A549 (cell line): ENCODE measurements at regions of chr20 and their contacts with region 1.

Region 1: GRCh38 chr20:36273414-36274180 is 32.5 kb upstream of the DLGAP4 start:
- DNase-seq: peak; percentile 28 to 58
- ATAC-seq: peak; percentile 41 to 69; a peak in 4 of 6 replicates
- H3K4me3 ChIP-seq: no peak overlapping the region
- H3K27ac ChIP-seq: no peak overlapping the region
- H3K4me1 ChIP-seq: no peaks in the 10 kb centered on the region
- CTCF ChIP-seq: peak; percentile 56
- EP300 ChIP-seq: no peak
- POLR2A ChIP-seq: no peak
- RAD21 ChIP-seq: peak; percentile 54 to 64

Region 2: GRCh38 chr20:36231331-36231730 is 42.3 kb before region 1 on chr20:
- CTCF ChIA-PET with region 1: no interaction called
- POLR2A ChIA-PET with region 1: no interaction called
- DNase-seq: no peak
- ATAC-seq: no peak
- H3K4me3 ChIP-seq: no peak overlapping the region
- H3K27ac ChIP-seq: no peak overlapping the region
- H3K4me1 ChIP-seq: 0 out of 3 replicates have a peak, but pooled peaks cover 3% of the 10 kb centered on the region
- CTCF ChIP-seq: no peak
- EP300 ChIP-seq: no peak
- POLR2A ChIP-seq: no peak
- RAD21 ChIP-seq: no peak

Region 3: GRCh38 chr20:36261389-36262105 is 12.1 kb before region 1 on chr20:
- CTCF ChIA-PET with region 1: interaction called, 10 read pairs
- POLR2A ChIA-PET with region 1: interaction called, 5 read pairs
- DNase-seq: no peak
- ATAC-seq: peak; percentile 13 to 21; a peak in 2 of 6 replicates
- H3K4me3 ChIP-seq: no peak overlapping the region
- H3K27ac ChIP-seq: no peak overlapping the region
- H3K4me1 ChIP-seq: no peaks in the 10 kb centered on the region
- CTCF ChIP-seq: no peak
- EP300 ChIP-seq: no peak
- POLR2A ChIP-seq: no peak
- RAD21 ChIP-seq: no peak

Region 4: GRCh38 chr20:36298795-36299339 is 25.3 kb after region 1 on chr20:
- CTCF ChIA-PET with region 1: no interaction called
- POLR2A ChIA-PET with region 1: no interaction called
- DNase-seq: no peak
- ATAC-seq: no peak
- H3K4me3 ChIP-seq: no peak overlapping the region
- H3K27ac ChIP-seq: no peak overlapping the region
- H3K4me1 ChIP-seq: no peaks in the 10 kb centered on the region
- CTCF ChIP-seq: no peak
- EP300 ChIP-seq: no peak
- POLR2A ChIP-seq: no peak
- RAD21 ChIP-seq: no peak

Region 5: DNA sequence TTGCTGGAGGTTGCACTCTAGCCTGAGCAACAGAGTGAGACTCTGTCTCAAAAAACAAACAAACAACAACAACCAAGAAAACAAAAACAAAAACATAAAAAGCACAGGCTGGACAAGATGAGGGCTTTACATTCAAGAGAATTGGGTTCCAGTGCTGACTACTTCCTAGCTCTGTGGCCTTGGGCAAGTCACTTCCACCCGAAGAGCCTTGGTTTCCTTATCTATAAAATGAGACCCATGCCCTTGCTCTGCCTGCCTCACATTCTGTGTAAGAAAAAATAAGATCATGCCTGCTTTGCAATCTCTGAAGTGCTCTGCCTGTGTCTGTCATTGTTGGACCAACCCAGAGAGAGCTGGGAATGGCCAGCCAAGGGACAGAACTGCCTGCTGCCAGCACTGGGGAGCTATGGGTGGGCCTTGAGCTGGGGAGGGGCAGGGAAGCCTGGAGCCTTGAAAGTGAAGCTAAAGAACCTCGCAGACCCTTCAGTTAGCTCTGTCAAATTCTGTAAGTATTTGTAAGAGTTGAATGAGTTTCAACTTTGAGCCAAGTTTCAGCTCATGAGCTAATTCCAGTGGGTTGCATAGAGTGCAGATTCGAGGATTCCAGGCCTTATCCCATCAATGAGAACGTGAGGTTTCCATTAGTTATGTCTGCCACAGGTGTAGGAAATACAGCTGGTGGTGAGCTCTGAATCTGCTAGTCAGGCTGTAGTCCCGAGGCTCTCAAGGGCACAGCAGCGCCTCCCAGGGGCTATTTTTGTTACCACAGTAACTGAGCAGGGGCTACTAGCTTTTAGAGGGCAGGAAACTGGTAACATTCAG is 125.8 kb after region 1 on chr20:
- CTCF ChIA-PET with region 1: interaction called, 20 read pairs
- POLR2A ChIA-PET with region 1: no interaction called
- DNase-seq: peak; percentile 73 to 75
- ATAC-seq: peak; percentile 62 to 92
- H3K4me3 ChIP-seq: no peak overlapping the region
- H3K27ac ChIP-seq: no peak overlapping the region
- H3K4me1 ChIP-seq: no peaks in the 10 kb centered on the region
- CTCF ChIP-seq: peak; percentile 38; the same call in 2 of the 3 replicates
- EP300 ChIP-seq: no peak
- POLR2A ChIP-seq: no peak
- RAD21 ChIP-seq: peak; percentile 38 to 54; a peak in 4 of 5 replicates

Region 6: GRCh38 chr20:36411861-36412454 is 138.4 kb after region 1 on chr20:
- CTCF ChIA-PET with region 1: no interaction called
- POLR2A ChIA-PET with region 1: no interaction called
- DNase-seq: no peak
- ATAC-seq: peak in 1 of 2 experiments; percentile 22; a peak in 2 of 6 replicates
- H3K4me3 ChIP-seq: no peak overlapping the region
- H3K27ac ChIP-seq: no peak overlapping the region
- H3K4me1 ChIP-seq: no peaks in the 10 kb centered on the region
- CTCF ChIP-seq: no peak
- EP300 ChIP-seq: no peak
- POLR2A ChIP-seq: no peak
- RAD21 ChIP-seq: no peak